BJ (cell line): ENCODE measurements at regions of chr13 and their contacts with region 1.

Region 1: GRCh38 chr13:27233964-27234363 is 17.4 kb upstream of the RPL21 start:
- DNase-seq: no peak
- H3K4me3 ChIP-seq: no peak overlapping the region
- H3K27me3 ChIP-seq: no peaks in the 10 kb centered on the region
- CTCF ChIP-seq: no peak

Region 2: DNA sequence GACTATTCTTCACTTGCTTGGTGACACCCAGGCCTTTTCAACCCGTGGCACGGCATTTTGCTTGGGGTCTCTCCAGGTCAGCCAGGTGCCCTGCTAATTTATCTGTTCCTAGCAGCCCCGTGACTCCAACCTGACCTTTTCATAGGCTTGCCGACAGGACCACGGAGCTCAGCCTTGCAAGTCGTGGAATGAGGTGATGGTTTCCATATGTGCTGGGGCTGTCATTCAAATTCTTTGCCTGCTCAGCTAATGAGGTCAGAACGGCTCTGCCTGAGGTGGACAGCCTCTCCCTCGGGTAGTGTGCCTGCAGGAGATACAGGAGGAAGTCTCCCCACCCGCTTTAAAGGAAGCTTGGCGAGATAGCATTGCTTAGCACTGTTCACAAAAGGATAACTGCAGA is 1243.2 kb before region 1 on chr13:
- CTCF ChIA-PET with region 1: no interaction called
- POLR2A ChIA-PET with region 1: no interaction called
- DNase-seq: peak; percentile 1
- H3K4me3 ChIP-seq: no peak overlapping the region
- H3K27me3 ChIP-seq: no peaks in the 10 kb centered on the region
- CTCF ChIP-seq: no peak

Region 3: GRCh38 chr13:28467034-28467433 is 1233.1 kb after region 1 on chr13:
- CTCF ChIA-PET with region 1: no interaction called
- POLR2A ChIA-PET with region 1: interaction called, 16 read pairs
- DNase-seq: no peak
- H3K4me3 ChIP-seq: no peak overlapping the region
- H3K27me3 ChIP-seq: no peaks in the 10 kb centered on the region
- CTCF ChIP-seq: no peak